ENCODE measurements at regions of chrX and their contacts with region 1.

Region 1: GRCh38 chrX:130110379-130111219 is at the start of gene ELF4:
- DNase-seq: peak in 8 of 10 donors; percentile 20 to 73 (median 38)
- ATAC-seq: peak; percentile 62 to 77
- H3K4me3 Mint-ChIP-seq: peak within 1 kb of the TSS; percentile 81 to 92 (median 90)
- H3K27ac Mint-ChIP-seq: peak within 1 kb of the TSS in 9 of 10 donors; percentile 37 to 93 (median 86)
- H3K4me1 Mint-ChIP-seq: peaks cover 6 to 42% (median 32%) of the 10 kb centered on the region in 4 donors
- H3K27me3 Mint-ChIP-seq: no peaks in the 10 kb centered on the region
- polyA plus RNA-seq, gene ELF4: 7.7 to 10.9 (median 9.2) TPM

Region 2: GRCh38 chrX:130060122-130061069 is 50.2 kb before region 1 on chrX:
- POLR2A ChIA-PET with region 1: no interaction called
- DNase-seq: peak; percentile 57 to 85 (median 77)
- ATAC-seq: peak; percentile 88 to 90
- H3K4me3 Mint-ChIP-seq: peak overlapping the region; percentile 52 to 84 (median 70)
- H3K27ac Mint-ChIP-seq: peak overlapping the region in 3 of 10 donors; percentile 5 to 55 (median 14)
- H3K4me1 Mint-ChIP-seq: peaks cover 0 to 9% (median 4%) of the 10 kb centered on the region in 4 donors
- H3K27me3 Mint-ChIP-seq: no peaks in the 10 kb centered on the region

Region 3: GRCh38 chrX:130091958-130092522 is 18.6 kb before region 1 on chrX:
- POLR2A ChIA-PET with region 1: interaction called, 33 read pairs
- DNase-seq: peak; percentile 53 to 95 (median 84)
- ATAC-seq: peak; percentile 96 to 98
- H3K4me3 Mint-ChIP-seq: peak overlapping the region; percentile 80 to 95 (median 86)
- H3K27ac Mint-ChIP-seq: peak overlapping the region; percentile 86 to 97 (median 96)
- H3K4me1 Mint-ChIP-seq: peaks cover 16 to 84% (median 58%) of the 10 kb centered on the region in 4 donors
- H3K27me3 Mint-ChIP-seq: no peaks in the 10 kb centered on the region